ENCODE measurements at regions of chr2 and their contacts with region 1.

Region 1: DNA sequence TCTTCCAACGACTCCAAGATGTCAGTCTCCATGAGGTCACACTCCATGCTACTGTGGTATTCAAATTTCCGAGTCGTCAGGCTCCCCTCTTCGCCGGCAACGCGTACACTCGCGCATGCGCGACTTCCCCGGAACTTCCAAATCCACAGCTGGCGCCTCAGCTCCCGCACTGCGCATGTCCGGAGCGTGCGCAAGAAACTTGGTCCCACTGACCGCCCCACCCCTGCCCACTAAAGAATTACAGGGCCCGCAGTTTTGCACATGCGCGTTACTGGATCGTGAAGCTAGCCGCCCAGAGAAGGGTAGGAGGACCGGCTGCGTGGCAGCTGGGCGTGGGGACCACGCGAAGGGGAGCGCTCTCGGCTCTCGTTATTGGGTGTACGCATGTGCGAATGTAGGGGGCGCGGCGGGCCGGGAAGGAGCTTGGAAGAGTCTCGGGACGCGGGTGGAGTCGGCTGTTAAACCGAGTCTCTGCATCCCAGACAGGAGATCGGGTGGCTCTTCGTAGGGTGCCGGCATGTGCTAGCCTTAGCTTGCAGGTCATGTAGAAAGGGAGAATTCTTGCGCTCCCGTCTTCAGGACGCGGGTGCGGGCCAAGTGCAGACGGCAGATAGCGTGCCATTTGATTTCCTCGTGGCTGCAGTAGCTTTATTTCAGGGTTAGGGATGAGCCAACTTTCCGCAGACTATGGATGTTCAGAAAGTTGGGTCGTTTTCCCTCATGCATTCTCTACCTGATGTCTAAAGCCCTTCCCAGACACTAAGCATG is at the start of gene FAM98A:
- DNase-seq: peak; percentile 98
- H3K4me3 Mint-ChIP-seq: peak within 1 kb of the TSS; percentile 88
- H3K27ac Mint-ChIP-seq: peak within 1 kb of the TSS; percentile 97
- H3K4me1 Mint-ChIP-seq: peaks cover 20% of the 10 kb centered on the region
- H3K27me3 Mint-ChIP-seq: peaks cover 3% of the 10 kb centered on the region
- total RNA-seq, gene FAM98A: 62.7 and 63.8 TPM in 2 replicates

Region 2: GRCh38 chr2:32464431-32464830 is 1134.9 kb before region 1 on chr2:
- intact Hi-C with region 1: loop called (anchors 10 kb)
- DNase-seq: no peak
- H3K4me3 Mint-ChIP-seq: no peak overlapping the region
- H3K27ac Mint-ChIP-seq: no peak overlapping the region
- H3K4me1 Mint-ChIP-seq: peaks cover 4% of the 10 kb centered on the region
- H3K27me3 Mint-ChIP-seq: no peaks in the 10 kb centered on the region

Region 3: DNA sequence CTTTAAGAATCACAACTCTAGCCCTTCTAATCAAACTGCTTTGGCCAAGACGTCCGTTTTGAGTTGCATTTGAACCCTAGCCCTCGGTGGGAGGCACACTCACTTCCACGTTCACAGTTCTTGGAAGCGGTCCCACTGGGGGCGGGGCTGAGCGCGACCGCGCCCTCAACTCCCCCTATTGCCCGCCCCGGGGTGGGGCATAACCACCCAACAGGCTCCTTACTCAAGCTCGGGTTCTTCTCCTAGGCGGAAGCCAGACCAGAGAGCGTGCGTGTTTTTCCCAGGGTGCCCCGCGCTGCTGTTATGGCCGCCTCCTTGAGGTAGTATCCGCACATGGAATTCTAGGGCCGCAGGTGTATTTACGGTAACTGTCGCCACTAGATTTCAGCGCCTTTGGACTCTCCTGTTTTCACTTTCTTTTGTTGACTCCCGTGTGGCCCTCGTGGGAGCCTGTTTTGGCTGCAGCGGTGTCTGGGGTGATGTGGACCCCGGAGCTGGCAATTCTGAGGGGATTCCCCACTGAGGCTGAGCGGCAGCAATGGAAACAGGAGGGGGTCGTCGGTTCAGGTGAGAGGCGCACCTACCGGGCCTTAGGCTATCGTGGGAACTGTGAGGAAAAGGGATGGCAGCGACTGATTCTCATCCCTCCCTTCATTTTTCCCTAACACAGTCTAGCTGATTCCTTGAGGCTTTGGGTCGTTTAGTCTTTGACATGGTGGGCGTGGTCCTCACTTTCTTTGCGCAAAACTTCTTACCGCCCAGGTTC is 971.4 kb before region 1 on chr2 and contains the start of gene TTC27:
- intact Hi-C with region 1: loop called (anchors 5 kb)
- DNase-seq: peak; percentile 93
- H3K4me3 Mint-ChIP-seq: peak within 1 kb of the TSS; percentile 95
- H3K27ac Mint-ChIP-seq: peak within 1 kb of the TSS; percentile 95
- H3K4me1 Mint-ChIP-seq: peaks cover 27% of the 10 kb centered on the region
- H3K27me3 Mint-ChIP-seq: no peaks in the 10 kb centered on the region
- total RNA-seq, gene TTC27: 38.8 and 44.9 TPM in 2 replicates

Region 4: DNA sequence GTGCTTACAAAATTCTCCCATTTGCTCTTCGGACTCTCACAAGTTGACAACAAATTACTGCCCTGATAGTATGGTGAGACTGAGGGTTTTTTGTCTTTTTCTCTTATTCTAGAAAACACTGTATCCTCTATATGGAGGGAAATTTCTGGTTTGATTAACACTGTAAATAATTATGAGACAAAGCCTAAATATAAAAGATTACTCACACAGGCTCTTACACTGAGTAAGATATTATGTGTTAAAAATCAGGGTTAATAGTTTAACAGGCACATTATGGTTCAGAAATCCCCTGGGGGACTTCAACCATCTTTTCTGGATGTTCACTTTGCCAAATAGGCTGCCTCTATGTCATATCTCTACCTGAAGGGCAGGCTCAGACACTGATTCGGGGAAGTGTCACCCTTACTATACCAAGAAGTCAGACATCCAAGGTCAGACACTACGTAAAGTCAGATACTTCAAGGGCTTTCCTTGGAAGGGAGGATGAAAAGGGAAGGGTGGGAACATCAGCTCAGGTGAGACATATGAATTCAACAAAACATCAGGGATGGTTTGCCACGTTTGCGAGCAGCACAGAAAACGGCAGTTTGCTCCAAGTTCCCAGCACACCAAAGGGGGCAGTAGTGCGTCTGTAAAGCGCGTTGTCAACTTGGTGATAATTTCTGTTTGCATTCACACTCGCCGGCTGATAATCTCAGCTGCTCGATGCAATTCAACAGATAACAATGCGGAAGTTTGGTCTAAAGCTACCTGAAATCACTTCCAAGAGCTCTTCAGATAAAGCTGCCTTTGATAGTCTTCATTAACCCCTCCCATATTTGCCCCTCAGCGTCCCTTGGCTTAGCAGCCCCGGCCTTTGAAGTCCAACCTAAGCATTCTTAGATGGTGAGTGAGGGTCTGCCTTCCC is 123.9 kb before region 1 on chr2:
- intact Hi-C with region 1: loop called (anchors 1 kb)
- DNase-seq: peak; percentile 77
- H3K4me3 Mint-ChIP-seq: peak overlapping the region; percentile 83
- H3K27ac Mint-ChIP-seq: peak overlapping the region; percentile 96
- H3K4me1 Mint-ChIP-seq: peaks cover 30% of the 10 kb centered on the region
- H3K27me3 Mint-ChIP-seq: peaks cover 8% of the 10 kb centered on the region

Region 5: GRCh38 chr2:33497221-33497650 is 102.1 kb before region 1 on chr2:
- intact Hi-C with region 1: loop called (anchors 5 kb)
- DNase-seq: no peak
- H3K4me3 Mint-ChIP-seq: peak overlapping the region; percentile 11
- H3K27ac Mint-ChIP-seq: no peak overlapping the region
- H3K4me1 Mint-ChIP-seq: peaks cover 53% of the 10 kb centered on the region
- H3K27me3 Mint-ChIP-seq: peaks cover 15% of the 10 kb centered on the region

Region 6: GRCh38 chr2:33762636-33763035 is 163.3 kb after region 1 on chr2:
- intact Hi-C with region 1: no loop called
- DNase-seq: no peak
- H3K4me3 Mint-ChIP-seq: no peak overlapping the region
- H3K27ac Mint-ChIP-seq: no peak overlapping the region
- H3K4me1 Mint-ChIP-seq: no peaks in the 10 kb centered on the region
- H3K27me3 Mint-ChIP-seq: no peaks in the 10 kb centered on the region